Panc1 (cell line): ENCODE measurements at regions of chr18 and their contacts with region 1.

Region 1: GRCh38 chr18:78875268-78875997 is 104.2 kb upstream of the SALL3 start:
- DNase-seq: peak; percentile 22
- ATAC-seq: peak; percentile 77
- H3K4me3 ChIP-seq: no peak overlapping the region
- H3K27ac ChIP-seq: no peak overlapping the region
- H3K4me1 ChIP-seq: no peaks in the 10 kb centered on the region
- H3K27me3 ChIP-seq: peaks cover 28% of the 10 kb centered on the region
- CTCF ChIP-seq: peak; percentile 92

Region 2: GRCh38 chr18:78659748-78660147 is 215.7 kb before region 1 on chr18:
- CTCF ChIA-PET with region 1: no interaction called
- POLR2A ChIA-PET with region 1: no interaction called
- in situ Hi-C with region 1: no loop called
- intact Hi-C with region 1: loop called (anchors 5 kb)
- DNase-seq: no peak
- ATAC-seq: peak; percentile 72
- H3K4me3 ChIP-seq: no peak overlapping the region
- H3K27ac ChIP-seq: no peak overlapping the region
- H3K4me1 ChIP-seq: no peaks in the 10 kb centered on the region
- H3K27me3 ChIP-seq: peaks cover 3% of the 10 kb centered on the region; the same call in 1 of the 2 replicates
- CTCF ChIP-seq: no peak

Region 3: DNA sequence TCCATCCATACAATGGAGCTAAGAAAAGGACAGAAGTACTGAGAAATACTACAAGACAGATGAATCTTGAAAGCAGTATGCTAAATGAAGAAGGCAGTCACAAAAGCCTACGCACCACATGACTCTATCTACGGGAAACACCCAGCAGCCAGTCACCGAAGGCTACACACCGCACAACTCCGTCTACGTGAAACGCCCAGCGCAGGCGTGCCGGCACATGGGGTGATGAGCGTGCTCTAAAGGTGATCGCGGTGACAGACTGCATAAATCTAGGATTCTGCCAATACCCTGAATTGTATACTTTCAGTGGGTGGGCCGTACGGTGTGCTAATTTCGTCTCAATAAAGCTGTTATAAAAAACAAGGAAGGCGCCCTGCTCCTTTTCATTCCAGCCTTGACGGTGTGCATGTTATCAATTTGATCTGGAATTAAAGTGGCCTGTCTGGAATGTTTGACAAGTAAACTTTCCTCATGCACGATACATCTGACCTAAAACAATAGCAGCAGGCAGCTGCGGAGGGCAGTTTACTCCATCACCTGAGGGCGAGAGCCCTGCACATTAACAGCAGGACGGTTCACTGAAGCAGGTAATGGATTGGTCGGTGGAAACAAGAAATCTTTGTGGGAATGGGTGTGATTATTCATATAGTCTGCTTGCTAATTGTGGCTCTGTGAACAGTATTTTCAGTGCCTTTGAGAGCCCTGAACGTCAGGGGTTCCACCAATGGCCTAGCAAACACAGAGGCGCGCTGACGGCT is 18.0 kb after region 1 on chr18:
- CTCF ChIA-PET with region 1: no interaction called
- POLR2A ChIA-PET with region 1: no interaction called
- in situ Hi-C with region 1: no loop called
- intact Hi-C with region 1: no loop called
- DNase-seq: no peak
- ATAC-seq: no peak
- H3K4me3 ChIP-seq: no peak overlapping the region
- H3K27ac ChIP-seq: no peak overlapping the region
- H3K4me1 ChIP-seq: no peaks in the 10 kb centered on the region
- H3K27me3 ChIP-seq: peaks cover 4% of the 10 kb centered on the region; the same call in 1 of the 2 replicates
- CTCF ChIP-seq: no peak

Region 4: GRCh38 chr18:78906066-78906465 is 30.6 kb after region 1 on chr18:
- CTCF ChIA-PET with region 1: no interaction called
- POLR2A ChIA-PET with region 1: no interaction called
- in situ Hi-C with region 1: no loop called
- intact Hi-C with region 1: no loop called
- DNase-seq: no peak
- ATAC-seq: no peak
- H3K4me3 ChIP-seq: no peak overlapping the region
- H3K27ac ChIP-seq: no peak overlapping the region
- H3K4me1 ChIP-seq: 0 out of 2 replicates have a peak, but pooled peaks cover 3% of the 10 kb centered on the region
- H3K27me3 ChIP-seq: peaks cover 24% of the 10 kb centered on the region; the same call in 1 of the 2 replicates
- CTCF ChIP-seq: no peak

Region 5: DNA sequence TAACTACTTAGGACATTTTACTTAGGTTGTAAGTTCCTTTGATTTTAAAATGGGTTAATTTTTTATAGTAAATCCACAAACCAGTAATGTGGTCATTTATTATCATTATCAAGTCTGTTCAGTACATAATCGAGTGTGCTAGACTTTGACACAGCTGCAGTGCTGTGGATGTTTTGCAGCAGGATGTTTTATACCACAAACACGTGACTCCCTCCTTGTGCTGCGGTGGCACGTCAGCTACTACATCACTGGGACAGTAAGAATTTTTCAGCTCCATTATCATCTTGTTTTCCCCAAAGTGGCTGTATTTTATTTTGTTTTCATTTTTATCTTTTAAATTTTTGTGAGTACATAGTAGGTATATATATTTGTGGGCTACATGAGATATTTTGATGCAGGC is 263.8 kb after region 1 on chr18:
- CTCF ChIA-PET with region 1: no interaction called
- POLR2A ChIA-PET with region 1: no interaction called
- in situ Hi-C with region 1: no loop called
- intact Hi-C with region 1: no loop called
- DNase-seq: no peak
- ATAC-seq: no peak
- H3K4me3 ChIP-seq: no peak overlapping the region
- H3K27ac ChIP-seq: no peak overlapping the region
- H3K4me1 ChIP-seq: no peaks in the 10 kb centered on the region
- H3K27me3 ChIP-seq: no peaks in the 10 kb centered on the region
- CTCF ChIP-seq: no peak

Region 6: DNA sequence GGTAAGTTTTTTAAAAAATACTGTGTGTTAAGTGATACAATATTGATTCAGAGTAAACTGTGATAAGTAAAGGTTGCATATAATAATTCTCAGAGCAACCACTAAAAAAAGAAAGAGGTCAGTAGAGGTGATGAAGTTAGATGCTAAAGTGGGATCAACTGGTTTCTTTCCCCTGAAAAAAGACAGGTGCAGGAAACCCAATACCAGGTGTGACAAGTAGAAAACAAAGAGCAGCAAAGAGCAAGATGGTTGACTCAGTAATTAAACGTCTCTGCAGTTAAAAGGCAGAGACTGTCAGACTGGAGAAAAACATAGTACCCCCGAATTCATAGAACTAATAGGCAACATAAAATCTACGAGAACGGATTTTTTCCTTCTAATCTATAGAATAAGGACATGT is 322.1 kb after region 1 on chr18:
- CTCF ChIA-PET with region 1: no interaction called
- POLR2A ChIA-PET with region 1: interaction called, 11 read pairs
- in situ Hi-C with region 1: no loop called
- intact Hi-C with region 1: no loop called
- DNase-seq: no peak
- ATAC-seq: no peak
- H3K4me3 ChIP-seq: no peak overlapping the region
- H3K27ac ChIP-seq: no peak overlapping the region
- H3K4me1 ChIP-seq: no peaks in the 10 kb centered on the region
- H3K27me3 ChIP-seq: no peaks in the 10 kb centered on the region
- CTCF ChIP-seq: no peak

Region 7: GRCh38 chr18:79246348-79247108 is 371.1 kb after region 1 on chr18:
- CTCF ChIA-PET with region 1: no interaction called
- POLR2A ChIA-PET with region 1: no interaction called
- in situ Hi-C with region 1: no loop called
- intact Hi-C with region 1: loop called (anchors 5 kb)
- DNase-seq: peak; percentile 95
- ATAC-seq: peak; percentile 99
- H3K4me3 ChIP-seq: peak overlapping the region; percentile 58 to 64
- H3K27ac ChIP-seq: peak overlapping the region; percentile 96
- H3K4me1 ChIP-seq: peaks cover 16% of the 10 kb centered on the region
- H3K27me3 ChIP-seq: no peaks in the 10 kb centered on the region
- CTCF ChIP-seq: peak; percentile 100